Tibial artery (tissue), 4 donors: ENCODE measurements at regions of chr17 and their contacts with region 1.

Region 1: DNA sequence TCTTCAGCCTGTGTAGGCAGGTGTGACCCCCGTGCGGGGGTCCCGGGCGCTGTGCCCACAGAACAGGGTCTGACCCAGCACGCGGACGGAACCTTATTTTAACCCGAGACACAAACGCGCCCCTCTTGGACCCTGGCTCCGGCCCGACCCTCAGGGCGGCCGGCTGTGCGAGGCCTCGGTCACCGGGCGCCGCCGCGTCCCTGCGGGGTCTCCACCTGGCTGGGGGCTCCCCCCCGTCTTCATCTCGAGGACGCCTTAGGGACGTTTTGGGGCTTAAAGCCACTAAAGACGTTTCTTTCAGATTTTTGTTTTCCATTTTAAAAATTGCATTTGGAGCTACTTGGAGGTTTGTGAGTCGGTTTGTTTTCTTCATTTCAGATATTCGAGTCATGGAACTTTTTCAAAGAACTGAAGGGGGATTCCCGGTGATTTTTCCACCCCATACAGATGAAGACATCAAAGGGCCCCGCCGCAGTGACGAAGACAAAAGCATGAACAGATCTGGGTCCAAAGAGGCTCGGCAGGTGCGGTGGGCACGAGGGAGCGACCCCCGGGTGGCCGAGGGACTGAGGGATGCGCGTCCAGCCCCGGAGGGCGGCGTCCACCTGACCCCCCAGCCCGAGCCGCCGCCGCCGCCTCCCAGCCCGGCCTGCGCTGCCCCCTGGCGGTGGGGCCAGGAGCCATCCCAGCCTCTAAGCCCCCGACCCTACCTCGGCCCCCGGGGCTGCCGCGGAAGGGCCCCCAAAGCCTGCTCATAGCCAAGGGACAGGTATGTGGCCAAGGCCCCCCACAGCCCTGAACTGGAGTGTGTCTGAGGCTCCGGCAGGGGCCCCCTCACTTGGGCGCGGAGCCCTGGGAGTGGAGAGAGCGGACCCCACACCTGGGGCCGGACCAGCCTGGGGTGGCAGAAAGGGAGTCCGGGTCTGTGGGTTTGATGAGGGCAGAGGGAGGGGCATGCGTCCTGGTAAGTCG is 3.8 kb upstream of the CD7 start:
- DNase-seq: no peak
- H3K4me3 ChIP-seq: no peak overlapping the region
- H3K27ac ChIP-seq: no peak overlapping the region
- H3K4me1 ChIP-seq: peaks cover 0 to 10% (median 5%) of the 10 kb centered on the region in 4 donors
- H3K27me3 ChIP-seq: peaks cover 0 to 64% of the 10 kb centered on the region in 2 donors
- CTCF ChIP-seq: peak; percentile 91 to 93

Region 2: DNA sequence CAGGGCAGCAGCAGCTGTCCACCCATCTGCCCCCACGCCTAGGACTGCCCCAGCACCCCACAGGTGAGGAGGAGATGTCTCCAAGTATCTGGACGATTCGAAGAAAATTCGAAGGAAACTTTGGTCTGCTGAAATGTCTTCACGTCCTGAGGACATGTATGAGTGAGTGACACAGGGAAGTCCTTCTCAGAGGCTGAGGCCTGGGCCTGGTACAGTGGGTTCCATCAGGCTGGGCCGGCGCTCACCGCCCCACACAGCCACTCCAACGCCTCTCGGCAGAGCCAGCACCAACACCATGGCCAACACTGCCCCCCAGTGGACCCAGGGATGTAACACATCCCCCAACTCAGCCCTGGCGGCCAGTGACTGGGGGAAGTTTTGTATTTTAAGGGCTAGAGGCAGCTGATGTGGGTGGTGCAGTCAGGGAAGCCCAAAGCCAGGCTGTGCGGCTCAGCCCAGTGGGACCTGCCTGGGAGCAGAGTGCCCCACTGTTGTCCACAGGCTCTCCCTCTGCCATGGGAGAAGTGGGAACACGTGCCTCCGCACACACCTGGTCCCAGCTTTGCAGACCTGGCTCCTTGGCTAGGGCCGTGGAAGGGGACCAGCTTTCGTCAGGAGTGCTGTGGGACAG is 167.4 kb before region 1 on chr17:
- intact Hi-C with region 1: no loop called
- DNase-seq: peak; percentile 70 to 78
- H3K4me3 ChIP-seq: no peak overlapping the region
- H3K27ac ChIP-seq: no peak overlapping the region
- H3K4me1 ChIP-seq: peaks cover 0 to 12% (median 0%) of the 10 kb centered on the region in 4 donors
- H3K27me3 ChIP-seq: no peaks in the 10 kb centered on the region
- CTCF ChIP-seq: peak; percentile 84 to 88

Region 3: DNA sequence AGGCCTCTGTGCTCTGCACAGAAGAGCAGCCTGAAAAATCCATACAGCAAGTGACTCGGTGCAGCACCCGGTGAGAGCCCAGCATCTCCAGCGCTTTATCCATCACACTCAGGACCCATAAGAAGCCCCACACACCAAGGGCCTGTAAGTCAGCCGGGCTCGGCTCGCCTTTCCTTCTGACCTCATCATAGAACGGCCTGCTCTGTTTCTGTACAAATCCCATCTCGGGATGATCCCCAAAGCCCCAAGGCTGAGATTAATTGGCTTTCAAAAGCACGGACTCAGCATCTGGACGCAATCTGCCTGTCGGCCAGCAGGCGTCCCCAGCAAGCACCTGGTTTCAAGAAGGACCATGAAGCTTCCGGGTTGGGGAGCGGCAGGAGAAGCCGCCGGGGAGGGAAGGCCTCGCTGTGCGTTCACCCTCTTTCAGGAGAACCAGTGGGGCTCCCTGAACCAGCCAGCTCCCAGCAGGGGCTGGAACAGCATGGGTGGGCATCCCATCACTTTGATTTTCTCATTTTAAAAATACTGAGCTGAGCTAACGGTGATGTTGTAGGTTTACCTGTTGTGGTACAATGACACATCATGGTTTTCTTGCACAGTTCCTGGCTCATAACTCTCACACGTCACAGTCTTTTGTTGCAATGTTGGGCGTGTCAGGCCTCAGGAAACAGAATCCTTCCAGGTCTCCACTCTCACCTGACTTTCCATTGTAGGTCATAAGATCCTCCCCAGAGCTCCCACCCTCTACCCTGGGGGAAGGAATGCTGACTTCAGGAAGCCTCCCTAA is 115.3 kb before region 1 on chr17:
- intact Hi-C with region 1: loop called (anchors 2 kb)
- DNase-seq: peak; percentile 84 to 87
- H3K4me3 ChIP-seq: no peak overlapping the region
- H3K27ac ChIP-seq: peak overlapping the region; percentile 52 to 53
- H3K4me1 ChIP-seq: peaks cover 0 to 11% (median 8%) of the 10 kb centered on the region in 4 donors
- H3K27me3 ChIP-seq: no peaks in the 10 kb centered on the region
- CTCF ChIP-seq: peak; percentile 91 to 92

Region 4: GRCh38 chr17:82402865-82403264 is 81.6 kb after region 1 on chr17:
- intact Hi-C with region 1: no loop called
- DNase-seq: no peak
- H3K4me3 ChIP-seq: no peak overlapping the region
- H3K27ac ChIP-seq: no peak overlapping the region
- H3K4me1 ChIP-seq: peaks cover 0 to 10% (median 7%) of the 10 kb centered on the region in 4 donors
- H3K27me3 ChIP-seq: no peaks in the 10 kb centered on the region
- CTCF ChIP-seq: no peak